Endothelial cell of umbilical vein (primary cell): ENCODE measurements at regions of chr6 and their contacts with region 1.

Region 1: GRCh38 chr6:79672631-79673111 is 41.5 kb downstream of the SH3BGRL2 start:
- DNase-seq: peak; percentile 68
- H3K4me3 ChIP-seq: no peak overlapping the region
- H3K27ac ChIP-seq: peak overlapping the region; percentile 39
- H3K4me1 ChIP-seq: peaks cover 29% of the 10 kb centered on the region
- H3K27me3 ChIP-seq: no peaks in the 10 kb centered on the region
- CTCF ChIP-seq: peak; percentile 39 to 48
- POLR2A ChIP-seq: no peak

Region 2: DNA sequence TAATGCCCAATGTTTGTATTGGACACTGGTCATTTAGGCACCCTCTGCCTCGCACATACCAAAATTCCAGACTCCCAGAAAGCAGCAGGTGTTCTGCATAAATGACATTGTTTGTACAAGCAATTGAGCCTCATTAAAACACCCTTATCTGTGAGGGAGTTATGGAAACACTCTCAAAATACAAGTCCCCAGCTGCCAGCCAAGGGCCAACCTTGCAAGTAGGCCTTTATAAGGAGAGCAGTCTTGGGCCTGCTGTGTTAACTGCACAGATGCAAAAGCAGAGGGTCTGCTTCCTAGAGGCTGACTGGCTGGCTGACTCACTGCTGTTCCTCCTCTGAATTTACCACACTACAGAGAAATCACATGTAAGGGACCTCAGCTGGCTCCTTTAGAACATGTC is 287.8 kb before region 1 on chr6:
- CTCF ChIA-PET with region 1: no interaction called
- POLR2A ChIA-PET with region 1: no interaction called
- dilution Hi-C with region 1: no loop called
- intact Hi-C with region 1: loop called (anchors 10 kb)
- DNase-seq: peak; percentile 50
- H3K4me3 ChIP-seq: no peak overlapping the region
- H3K27ac ChIP-seq: peak overlapping the region; percentile 86
- H3K4me1 ChIP-seq: peaks cover 26% of the 10 kb centered on the region
- H3K27me3 ChIP-seq: no peaks in the 10 kb centered on the region
- CTCF ChIP-seq: no peak
- POLR2A ChIP-seq: no peak

Region 3: DNA sequence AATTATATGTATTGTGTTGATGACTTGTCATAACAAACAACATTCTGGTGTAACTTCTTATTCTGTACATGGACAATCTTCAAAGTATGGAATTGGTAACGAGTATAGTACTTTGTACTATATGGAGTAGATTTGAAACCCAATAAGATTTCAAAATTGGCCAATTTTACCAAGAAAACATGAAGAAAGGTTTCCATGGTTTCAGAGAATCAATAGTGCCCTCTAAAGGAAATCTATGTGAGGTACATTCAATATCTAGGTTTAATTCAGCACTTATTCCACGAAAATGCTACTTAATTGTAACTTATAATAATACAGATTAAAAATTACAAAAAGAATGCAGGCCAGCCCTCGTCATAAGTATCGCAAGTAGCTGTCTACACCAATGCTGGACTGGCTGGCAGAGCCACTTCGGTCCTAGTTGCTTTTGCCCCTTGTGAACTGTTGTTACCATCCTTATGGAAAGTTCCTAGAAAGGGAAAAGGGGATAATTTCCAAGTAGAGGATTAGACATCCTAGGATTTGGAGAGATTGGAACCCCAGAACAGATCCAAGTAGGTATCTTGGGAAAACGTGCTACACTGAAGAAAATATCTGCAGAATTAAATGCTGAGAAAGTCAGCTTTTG is 206.3 kb before region 1 on chr6:
- CTCF ChIA-PET with region 1: interaction called, 11 read pairs
- POLR2A ChIA-PET with region 1: no interaction called
- dilution Hi-C with region 1: no loop called
- intact Hi-C with region 1: loop called (anchors 2 kb)
- DNase-seq: peak; percentile 59
- H3K4me3 ChIP-seq: no peak overlapping the region
- H3K27ac ChIP-seq: no peak overlapping the region
- H3K4me1 ChIP-seq: peaks cover 7% of the 10 kb centered on the region
- H3K27me3 ChIP-seq: no peaks in the 10 kb centered on the region
- CTCF ChIP-seq: peak; percentile 27 to 33
- POLR2A ChIP-seq: no peak

Region 4: DNA sequence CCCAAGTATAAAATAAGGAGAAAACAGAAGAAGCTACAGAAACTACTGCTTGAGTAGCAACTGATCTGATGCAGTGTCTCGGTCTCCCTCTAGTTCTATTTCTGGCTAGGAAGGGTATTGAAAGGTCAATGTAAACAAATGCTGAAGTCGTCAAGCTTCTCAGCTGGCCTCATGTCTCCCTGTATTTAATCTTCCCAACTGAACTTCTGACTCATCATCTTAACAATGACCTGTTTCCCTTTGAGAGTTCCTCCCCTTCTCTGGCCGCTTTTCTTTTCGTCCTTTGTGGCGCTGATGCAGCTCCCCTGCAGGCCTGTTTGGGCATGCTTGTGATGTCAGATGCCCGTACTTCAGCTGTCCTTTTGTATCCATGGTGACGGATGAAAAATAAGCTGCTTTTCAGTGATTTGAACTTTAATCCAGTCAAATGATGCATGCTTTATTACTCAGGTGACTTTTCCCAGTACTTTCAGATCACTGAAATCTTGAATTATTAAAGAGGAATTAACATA is 127.7 kb before region 1 on chr6:
- CTCF ChIA-PET with region 1: interaction called, 11 read pairs
- POLR2A ChIA-PET with region 1: no interaction called
- dilution Hi-C with region 1: no loop called
- intact Hi-C with region 1: no loop called
- DNase-seq: peak; percentile 99
- H3K4me3 ChIP-seq: no peak overlapping the region
- H3K27ac ChIP-seq: peak overlapping the region; percentile 86
- H3K4me1 ChIP-seq: peaks cover 24% of the 10 kb centered on the region
- H3K27me3 ChIP-seq: no peaks in the 10 kb centered on the region
- CTCF ChIP-seq: peak; percentile 60 to 62
- POLR2A ChIP-seq: peak; percentile 28

Region 5: GRCh38 chr6:79630883-79631692 is 41.6 kb before region 1 on chr6 and contains the start of gene SH3BGRL2:
- CTCF ChIA-PET with region 1: interaction called, 17 read pairs
- POLR2A ChIA-PET with region 1: no interaction called
- dilution Hi-C with region 1: no loop called
- intact Hi-C with region 1: loop called (anchors 2 kb)
- DNase-seq: peak; percentile 81
- H3K4me3 ChIP-seq: peak within 1 kb of the TSS; percentile 86 to 92 (median 89)
- H3K27ac ChIP-seq: peak within 1 kb of the TSS; percentile 46
- H3K4me1 ChIP-seq: peaks cover 39% of the 10 kb centered on the region
- H3K27me3 ChIP-seq: no peaks in the 10 kb centered on the region
- CTCF ChIP-seq: no peak
- POLR2A ChIP-seq: peak; percentile 49
- total RNA-seq, gene SH3BGRL2: 10.7 and 15.2 TPM in 2 replicates

Region 6: DNA sequence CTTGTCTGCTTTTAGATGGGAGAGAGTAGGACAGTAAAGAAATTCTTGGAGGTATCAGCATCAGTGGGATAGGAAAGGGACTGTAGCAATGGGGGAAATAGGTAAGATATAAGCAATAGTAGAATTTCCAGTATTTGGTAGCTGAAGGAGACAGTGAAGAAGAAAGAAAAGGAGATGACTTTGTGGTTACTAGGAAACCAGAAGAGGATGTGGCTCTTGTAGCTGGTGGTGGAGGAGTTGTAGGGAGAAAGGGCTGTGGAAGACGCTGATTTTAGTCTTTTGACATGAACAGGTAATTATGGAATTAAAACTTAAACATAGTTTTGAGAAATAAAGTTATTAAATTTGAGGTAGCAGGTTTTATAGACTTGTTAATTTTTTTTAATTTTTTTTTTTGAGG is 15.4 kb before region 1 on chr6:
- CTCF ChIA-PET with region 1: no interaction called
- POLR2A ChIA-PET with region 1: no interaction called
- dilution Hi-C with region 1: no loop called
- intact Hi-C with region 1: no loop called
- DNase-seq: no peak
- H3K4me3 ChIP-seq: no peak overlapping the region
- H3K27ac ChIP-seq: no peak overlapping the region
- H3K4me1 ChIP-seq: no peaks in the 10 kb centered on the region
- H3K27me3 ChIP-seq: no peaks in the 10 kb centered on the region
- CTCF ChIP-seq: no peak
- POLR2A ChIP-seq: no peak

Region 7: GRCh38 chr6:79813854-79814709 is 141.4 kb after region 1 on chr6:
- CTCF ChIA-PET with region 1: no interaction called
- POLR2A ChIA-PET with region 1: no interaction called
- dilution Hi-C with region 1: no loop called
- intact Hi-C with region 1: loop called (anchors 10 kb)
- DNase-seq: peak; percentile 73
- H3K4me3 ChIP-seq: no peak overlapping the region
- H3K27ac ChIP-seq: no peak overlapping the region
- H3K4me1 ChIP-seq: no peaks in the 10 kb centered on the region
- H3K27me3 ChIP-seq: peaks cover 6 to 9% of the 10 kb centered on the region in 2 experiments
- CTCF ChIP-seq: peak; percentile 81
- POLR2A ChIP-seq: no peak